CD14-positive monocyte (primary cell): ENCODE measurements at regions of chr6 and their contacts with region 1.

Region 1: DNA sequence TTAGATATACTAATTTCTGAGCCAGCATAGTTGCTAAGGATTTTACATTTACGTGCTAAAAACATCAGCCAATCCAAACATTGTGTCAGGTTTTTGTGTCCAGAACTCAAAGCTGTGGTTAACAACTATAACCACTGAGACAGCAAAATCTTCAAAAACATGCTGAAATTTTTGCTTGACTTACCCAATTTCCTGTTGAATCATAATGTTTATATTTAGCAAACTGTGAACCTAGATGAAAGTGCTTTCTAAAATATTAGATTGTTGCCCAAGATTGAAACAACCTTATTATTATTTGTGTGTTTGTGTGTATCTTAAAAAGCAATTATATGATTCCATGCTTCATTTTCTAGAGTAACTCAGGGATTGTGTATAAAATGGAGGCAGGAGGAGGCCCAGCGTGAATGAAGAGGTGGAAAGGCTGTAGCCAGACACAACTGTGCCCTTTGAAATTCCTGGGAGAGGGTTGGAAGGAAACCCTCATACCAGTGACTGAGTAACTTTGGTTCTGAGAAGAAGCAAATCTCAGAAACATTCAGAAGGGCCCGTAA is 48.0 kb downstream of the ARMC2 start:
- DNase-seq: peak; percentile 83 to 97 (median 90)
- H3K4me3 ChIP-seq: peak overlapping the region in 2 of 3 experiments; percentile 12 to 47
- H3K4me3 Mint-ChIP-seq: peak overlapping the region; percentile 8 to 76
- H3K27ac ChIP-seq: peak overlapping the region; percentile 67 to 82
- H3K27ac Mint-ChIP-seq: peak overlapping the region; percentile 92 to 99 (median 98)
- H3K4me1 ChIP-seq: peaks cover 33 to 51% of the 10 kb centered on the region in 2 donors
- H3K4me1 Mint-ChIP-seq: peaks cover 38% of the 10 kb centered on the region
- H3K27me3 ChIP-seq: no peaks in the 10 kb centered on the region
- H3K27me3 Mint-ChIP-seq: peaks cover 0 to 1% (median 0%) of the 10 kb centered on the region in 3 donors
- CTCF ChIP-seq: no peak

Region 2: GRCh38 chr6:108541838-108542759 is 354.1 kb before region 1 on chr6:
- intact Hi-C with region 1: loop called in 1 of 2 experiments (anchors 5 kb)
- DNase-seq: peak; percentile 59 to 74 (median 72)
- H3K4me3 ChIP-seq: no peak overlapping the region
- H3K4me3 Mint-ChIP-seq: no peak overlapping the region
- H3K27ac ChIP-seq: no peak overlapping the region
- H3K27ac Mint-ChIP-seq: peak overlapping the region in 2 of 7 donors; percentile 6 to 19
- H3K4me1 ChIP-seq: peaks cover 10 to 12% of the 10 kb centered on the region in 2 donors
- H3K4me1 Mint-ChIP-seq: peaks cover 19% of the 10 kb centered on the region
- H3K27me3 ChIP-seq: no peaks in the 10 kb centered on the region
- H3K27me3 Mint-ChIP-seq: peaks cover 0 to 3% (median 2%) of the 10 kb centered on the region in 3 donors
- CTCF ChIP-seq: peak; percentile 95

Region 3: GRCh38 chr6:108635505-108636226 is 260.5 kb before region 1 on chr6:
- intact Hi-C with region 1: no loop called
- DNase-seq: peak; percentile 47 to 73 (median 55)
- H3K4me3 ChIP-seq: peak overlapping the region in 1 of 3 experiments; percentile 9
- H3K4me3 Mint-ChIP-seq: peak overlapping the region in 1 of 2 donors; percentile 22
- H3K27ac ChIP-seq: no peak overlapping the region
- H3K27ac Mint-ChIP-seq: peak overlapping the region; percentile 2 to 70 (median 50)
- H3K4me1 ChIP-seq: peaks cover 15 to 35% of the 10 kb centered on the region in 2 donors
- H3K4me1 Mint-ChIP-seq: peaks cover 60% of the 10 kb centered on the region
- H3K27me3 ChIP-seq: no peaks in the 10 kb centered on the region
- H3K27me3 Mint-ChIP-seq: no peaks in the 10 kb centered on the region
- CTCF ChIP-seq: no peak

Region 4: GRCh38 chr6:108782179-108783041 is 113.8 kb before region 1 on chr6:
- intact Hi-C with region 1: loop called in 1 of 2 experiments (anchors 10 kb)
- DNase-seq: peak; percentile 78 to 96 (median 84)
- H3K4me3 ChIP-seq: peak overlapping the region; percentile 29 to 73 (median 34)
- H3K4me3 Mint-ChIP-seq: peak overlapping the region; percentile 84 to 96
- H3K27ac ChIP-seq: peak overlapping the region in 1 of 2 donors; percentile 6
- H3K27ac Mint-ChIP-seq: peak overlapping the region in 6 of 7 donors; percentile 13 to 80 (median 67)
- H3K4me1 ChIP-seq: peaks cover 24 to 28% of the 10 kb centered on the region in 2 donors
- H3K4me1 Mint-ChIP-seq: peaks cover 29% of the 10 kb centered on the region
- H3K27me3 ChIP-seq: peaks cover 0 to 2% of the 10 kb centered on the region in 2 donors
- H3K27me3 Mint-ChIP-seq: peaks cover 8 to 19% (median 11%) of the 10 kb centered on the region in 3 donors
- CTCF ChIP-seq: peak; percentile 80

Region 5: GRCh38 chr6:108835218-108835850 is 60.9 kb before region 1 on chr6:
- intact Hi-C with region 1: loop called in 1 of 2 experiments (anchors 5 kb)
- DNase-seq: peak; percentile 81 to 85 (median 83)
- H3K4me3 ChIP-seq: no peak overlapping the region
- H3K4me3 Mint-ChIP-seq: peak overlapping the region in 1 of 2 donors; percentile 89
- H3K27ac ChIP-seq: no peak overlapping the region
- H3K27ac Mint-ChIP-seq: peak overlapping the region in 3 of 7 donors; percentile 58 to 65 (median 62)
- H3K4me1 ChIP-seq: peaks cover 23 to 31% of the 10 kb centered on the region in 2 donors
- H3K4me1 Mint-ChIP-seq: peaks cover 39% of the 10 kb centered on the region
- H3K27me3 ChIP-seq: peaks cover 0 to 18% of the 10 kb centered on the region in 2 donors
- H3K27me3 Mint-ChIP-seq: peaks cover 23 to 34% (median 26%) of the 10 kb centered on the region in 3 donors
- CTCF ChIP-seq: peak; percentile 94

Region 6: DNA sequence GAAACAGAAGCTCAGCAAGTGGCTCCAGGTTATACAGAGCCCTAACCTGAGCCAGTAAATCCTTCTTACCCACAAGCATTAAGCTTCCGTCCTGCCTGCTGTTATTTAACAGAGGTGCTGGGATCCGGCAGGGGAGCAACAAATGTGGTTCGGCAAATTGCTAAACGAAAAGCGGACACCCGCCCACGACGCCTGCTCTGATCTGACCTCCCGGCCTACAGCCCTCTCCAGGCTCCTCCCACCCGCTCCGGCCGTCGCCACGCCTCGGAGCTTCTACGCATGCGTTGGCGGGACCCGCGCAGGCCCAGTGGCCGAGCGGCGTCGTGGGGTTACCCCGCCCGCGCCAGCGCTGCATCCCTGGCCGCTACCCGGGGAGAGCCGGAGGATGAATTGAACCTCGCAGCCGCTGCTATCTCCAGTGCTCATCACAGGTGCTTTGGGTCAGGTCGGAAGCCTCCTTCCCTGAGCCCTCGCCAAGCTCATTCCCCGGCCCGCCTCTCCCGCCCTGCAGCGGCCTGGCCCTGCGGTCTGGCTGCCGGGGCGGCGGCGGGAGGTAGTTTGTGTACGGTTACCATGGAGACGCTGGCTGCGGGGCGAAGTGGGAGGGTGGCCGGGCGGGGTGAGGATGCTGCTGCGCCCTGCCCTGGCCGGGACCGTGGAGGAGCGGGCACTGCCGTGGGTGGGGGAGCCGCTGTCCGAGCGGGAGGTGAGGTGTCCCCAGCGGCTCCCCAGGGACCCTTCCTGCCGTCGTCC is 47.9 kb before region 1 on chr6 and contains the start of gene ARMC2:
- intact Hi-C with region 1: loop called in 1 of 2 experiments (anchors 5 kb)
- DNase-seq: peak; percentile 87 to 92 (median 88)
- H3K4me3 ChIP-seq: peak within 1 kb of the TSS; percentile 58 to 82 (median 68)
- H3K4me3 Mint-ChIP-seq: peak within 1 kb of the TSS; percentile 82 to 89
- H3K27ac ChIP-seq: peak within 1 kb of the TSS; percentile 58 to 75
- H3K27ac Mint-ChIP-seq: peak within 1 kb of the TSS; percentile 83 to 94 (median 88)
- H3K4me1 ChIP-seq: peaks cover 42 to 57% of the 10 kb centered on the region in 2 donors
- H3K4me1 Mint-ChIP-seq: peaks cover 51% of the 10 kb centered on the region
- H3K27me3 ChIP-seq: no peaks in the 10 kb centered on the region
- H3K27me3 Mint-ChIP-seq: peaks cover 0 to 3% (median 0%) of the 10 kb centered on the region in 3 donors
- CTCF ChIP-seq: no peak
- polyA plus RNA-seq, gene ARMC2: 1.7 to 7.4 (median 3.5) TPM

Region 7: GRCh38 chr6:108966855-108967755 is 70.9 kb after region 1 on chr6:
- intact Hi-C with region 1: loop called in 1 of 2 experiments (anchors 10 kb)
- DNase-seq: peak; percentile 87 to 98 (median 88)
- H3K4me3 ChIP-seq: peak overlapping the region in 1 of 3 experiments; percentile 31
- H3K4me3 Mint-ChIP-seq: peak overlapping the region; percentile 16 to 79
- H3K27ac ChIP-seq: peak overlapping the region; percentile 18 to 59
- H3K27ac Mint-ChIP-seq: peak overlapping the region; percentile 78 to 95 (median 87)
- H3K4me1 ChIP-seq: peaks cover 33 to 34% of the 10 kb centered on the region in 2 donors
- H3K4me1 Mint-ChIP-seq: peaks cover 33% of the 10 kb centered on the region
- H3K27me3 ChIP-seq: no peaks in the 10 kb centered on the region
- H3K27me3 Mint-ChIP-seq: peaks cover 0 to 3% (median 2%) of the 10 kb centered on the region in 3 donors
- CTCF ChIP-seq: no peak